ENCODE measurements at regions of chr14 and their contacts with region 1.

Region 1: DNA sequence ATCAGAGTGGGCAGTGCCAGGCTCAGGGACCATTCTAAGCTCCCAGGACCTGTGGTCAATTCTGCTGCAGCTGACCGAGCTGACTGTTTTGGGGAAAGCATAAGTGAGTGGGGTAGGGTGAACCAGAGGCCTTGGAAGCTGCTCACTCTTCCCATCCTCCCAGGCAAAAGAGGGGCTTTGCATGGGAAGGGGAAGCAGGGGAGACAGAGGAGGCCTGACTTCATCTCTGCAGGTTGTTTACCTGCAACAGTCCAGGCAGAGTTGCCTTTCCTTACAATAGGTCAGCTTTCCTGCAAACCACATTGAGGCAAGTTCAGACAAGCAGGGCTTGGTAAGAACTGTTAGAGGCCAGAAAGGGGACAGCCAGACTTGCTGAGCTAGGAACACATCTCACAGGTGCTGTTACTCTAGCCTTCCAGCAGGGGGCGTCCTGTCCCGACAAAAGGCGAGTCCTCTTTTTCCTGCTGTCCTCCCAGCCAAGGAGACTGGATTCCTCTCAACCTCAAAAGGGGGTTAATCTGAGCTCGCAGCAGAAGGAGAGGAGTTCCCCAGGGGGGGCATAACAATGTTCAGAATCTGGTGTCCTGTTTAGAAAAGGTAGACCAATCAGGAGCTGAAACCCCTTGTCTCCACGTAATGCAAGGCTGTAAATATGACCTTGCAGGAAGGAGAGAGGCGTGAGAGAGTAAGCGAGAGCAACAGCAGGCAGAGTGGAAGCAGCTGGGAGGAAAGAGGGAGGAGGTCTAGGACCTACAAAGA is 4.3 kb upstream of the DHRS2 start:
- DNase-seq: peak; percentile 51
- ATAC-seq: peak; percentile 93
- H3K4me3 ChIP-seq: no peak overlapping the region
- H3K27ac ChIP-seq: 0 out of 2 replicates have a peak overlapping the region, but pooled peaks have one; percentile 3
- H3K4me1 ChIP-seq: peaks cover 5% of the 10 kb centered on the region
- H3K27me3 ChIP-seq: no peaks in the 10 kb centered on the region
- CTCF ChIP-seq: peak; percentile 92 to 98 (median 96)
- EP300 ChIP-seq: no peak
- POLR2A ChIP-seq: no peak
- RAD21 ChIP-seq: peak; percentile 77

Region 2: DNA sequence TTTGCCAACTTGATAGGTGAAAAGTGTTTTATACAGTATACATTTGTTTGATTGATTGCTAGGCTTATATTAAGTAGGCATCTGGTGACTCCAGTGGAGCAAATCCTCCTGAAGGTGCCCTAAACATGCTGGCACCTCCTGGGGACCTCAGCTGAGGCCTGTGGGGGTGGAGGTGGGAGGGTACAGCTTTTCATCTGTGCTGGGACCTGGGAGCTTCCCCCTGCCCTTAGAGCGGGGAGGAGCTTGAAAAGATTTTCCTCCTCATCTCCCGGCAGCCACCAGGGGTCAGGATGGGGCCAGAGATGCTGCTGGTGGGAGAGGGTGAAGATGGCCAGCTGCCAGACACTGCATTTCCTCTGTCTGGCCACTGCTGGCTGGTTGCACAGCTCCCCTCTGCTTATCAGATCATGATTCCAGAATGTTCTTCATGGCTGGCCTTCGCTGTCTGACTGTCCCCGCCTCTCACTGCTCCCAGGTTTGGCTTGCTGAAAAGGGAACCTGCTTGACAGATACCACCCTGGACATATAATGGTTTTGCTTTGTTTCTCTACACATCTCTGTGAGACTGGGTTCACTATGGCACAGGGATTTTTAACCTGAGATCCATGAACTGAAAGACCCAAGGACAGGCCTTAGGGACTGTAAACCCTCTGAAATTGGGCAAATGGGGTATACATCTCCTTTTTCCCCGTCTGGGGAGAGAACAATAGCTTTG is 42.8 kb before region 1 on chr14:
- CTCF ChIA-PET with region 1: interaction called, 91 read pairs
- POLR2A ChIA-PET with region 1: interaction called, 12 read pairs
- RAD21 ChIA-PET with region 1: interaction called, 44 read pairs
- SMC1A ChIA-PET with region 1: interaction called, 44 read pairs
- in situ Hi-C with region 1: no loop called
- intact Hi-C with region 1: loop called (anchors 2 kb)
- DNase-seq: peak; percentile 56
- ATAC-seq: peak; percentile 100
- H3K4me3 ChIP-seq: no peak overlapping the region
- H3K27ac ChIP-seq: no peak overlapping the region
- H3K4me1 ChIP-seq: peaks cover 8% of the 10 kb centered on the region
- H3K27me3 ChIP-seq: no peaks in the 10 kb centered on the region
- CTCF ChIP-seq: peak; percentile 94 to 99 (median 95); a peak in 5 of 6 replicates
- EP300 ChIP-seq: 0 out of 4 replicates have a peak, but pooled peaks of 1 of the 2 experiments have one; percentile 15
- POLR2A ChIP-seq: no peak
- RAD21 ChIP-seq: peak; percentile 99

Region 3: GRCh38 chr14:23613242-23614070 is 18.4 kb before region 1 on chr14:
- CTCF ChIA-PET with region 1: interaction called, 67 read pairs
- POLR2A ChIA-PET with region 1: no interaction called
- RAD21 ChIA-PET with region 1: interaction called, 3 read pairs
- SMC1A ChIA-PET with region 1: interaction called, 22 read pairs
- in situ Hi-C with region 1: no loop called
- intact Hi-C with region 1: no loop called
- DNase-seq: no peak
- ATAC-seq: no peak; the same call in 2 of the 3 replicates
- H3K4me3 ChIP-seq: no peak overlapping the region
- H3K27ac ChIP-seq: no peak overlapping the region
- H3K4me1 ChIP-seq: no peaks in the 10 kb centered on the region
- H3K27me3 ChIP-seq: no peaks in the 10 kb centered on the region
- CTCF ChIP-seq: no peak
- EP300 ChIP-seq: no peak
- POLR2A ChIP-seq: no peak
- RAD21 ChIP-seq: no peak

Region 4: DNA sequence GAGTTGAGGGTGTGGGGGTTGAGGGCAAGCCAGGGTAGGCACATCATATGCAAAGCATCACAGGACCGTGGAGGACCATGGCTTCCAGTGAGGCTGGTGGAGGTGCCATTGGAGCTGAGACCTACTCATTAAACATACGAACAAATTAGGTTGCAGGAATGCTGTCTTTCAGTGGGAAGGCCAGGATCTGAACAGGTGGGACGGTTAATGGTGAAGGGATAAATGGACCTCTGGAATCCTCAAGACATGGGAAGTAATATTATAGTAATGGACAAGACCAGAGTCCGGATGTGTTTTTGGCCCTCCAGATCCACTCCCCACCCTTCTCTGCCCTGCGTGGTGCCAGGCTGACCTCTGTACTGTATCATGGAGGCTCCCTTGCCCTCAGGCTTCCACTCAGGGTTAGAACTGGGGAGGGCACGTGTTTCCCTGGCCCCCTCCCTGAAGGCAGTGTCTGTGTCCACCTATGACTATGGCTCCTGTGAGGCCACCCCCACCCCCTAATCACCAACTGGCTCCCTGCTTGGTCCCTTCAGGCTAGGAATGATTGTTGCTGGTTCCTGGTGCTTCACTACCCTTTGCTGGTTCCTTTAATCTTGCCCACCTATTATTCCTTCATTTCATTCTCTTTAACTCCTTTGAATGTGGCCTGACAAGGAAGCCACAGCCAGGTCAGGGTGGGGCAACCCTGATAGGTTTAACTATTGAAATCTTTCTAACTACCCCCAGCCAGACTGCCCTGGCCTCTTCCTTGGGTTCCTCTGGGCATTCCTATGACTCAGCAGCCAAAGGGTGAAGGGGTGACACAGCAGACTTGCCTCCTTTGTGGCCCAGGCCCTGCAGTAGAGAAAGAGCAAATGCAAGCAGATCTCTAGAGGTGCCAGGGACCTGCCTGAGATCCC is 15.0 kb after region 1 on chr14:
- CTCF ChIA-PET with region 1: interaction called, 28 read pairs
- POLR2A ChIA-PET with region 1: no interaction called
- RAD21 ChIA-PET with region 1: interaction called, 5 read pairs
- SMC1A ChIA-PET with region 1: interaction called, 8 read pairs
- in situ Hi-C with region 1: no loop called
- intact Hi-C with region 1: no loop called
- DNase-seq: no peak
- ATAC-seq: no peak
- H3K4me3 ChIP-seq: no peak overlapping the region
- H3K27ac ChIP-seq: no peak overlapping the region
- H3K4me1 ChIP-seq: no peaks in the 10 kb centered on the region
- H3K27me3 ChIP-seq: no peaks in the 10 kb centered on the region
- CTCF ChIP-seq: no peak
- EP300 ChIP-seq: no peak
- POLR2A ChIP-seq: no peak
- RAD21 ChIP-seq: no peak

Region 5: DNA sequence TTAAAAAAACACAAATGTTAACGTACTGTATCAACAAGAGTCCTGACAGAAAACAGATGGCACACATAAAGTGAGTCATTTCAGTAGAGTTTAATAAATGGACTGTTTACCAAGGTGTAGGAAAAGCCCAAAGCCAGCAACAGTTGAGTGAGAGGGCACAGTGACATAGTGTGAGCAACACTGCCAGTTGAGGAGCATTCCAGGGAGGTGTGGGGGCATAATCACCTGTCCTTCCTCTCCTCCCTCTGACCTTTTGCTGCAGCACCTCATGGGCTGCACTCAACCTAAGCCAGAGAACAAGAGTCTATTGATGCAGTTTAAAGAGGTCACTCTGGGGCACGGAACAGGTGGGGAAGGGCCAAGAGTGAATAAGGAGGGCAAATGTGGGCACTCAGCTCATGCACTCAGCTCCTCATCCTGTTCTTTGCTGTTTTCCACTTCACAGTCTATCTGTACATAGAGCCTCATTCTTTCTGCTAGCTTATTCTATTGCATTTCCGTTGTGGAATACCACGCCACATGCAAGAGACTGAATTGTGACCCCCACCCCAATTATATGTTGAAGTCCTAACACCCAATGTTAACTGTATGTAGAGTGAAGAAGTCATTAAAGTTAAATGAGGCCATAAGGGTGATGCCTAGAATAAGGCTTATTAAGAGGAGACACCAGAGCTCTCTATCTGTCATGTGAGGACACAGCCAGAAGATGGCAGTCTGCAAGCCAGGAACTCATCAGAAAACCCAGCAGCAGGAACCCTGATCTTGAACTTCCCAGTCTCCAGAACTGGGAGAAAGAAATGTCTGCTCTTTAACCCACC is 33.7 kb after region 1 on chr14:
- CTCF ChIA-PET with region 1: interaction called, 27 read pairs
- POLR2A ChIA-PET with region 1: no interaction called
- RAD21 ChIA-PET with region 1: interaction called, 8 read pairs
- SMC1A ChIA-PET with region 1: interaction called, 16 read pairs
- in situ Hi-C with region 1: no loop called
- intact Hi-C with region 1: no loop called
- DNase-seq: no peak
- ATAC-seq: peak; percentile 85
- H3K4me3 ChIP-seq: no peak overlapping the region
- H3K27ac ChIP-seq: no peak overlapping the region
- H3K4me1 ChIP-seq: no peaks in the 10 kb centered on the region
- H3K27me3 ChIP-seq: no peaks in the 10 kb centered on the region; a peak in 1 of 4 replicates
- CTCF ChIP-seq: peak; percentile 55 to 76 (median 69)
- EP300 ChIP-seq: no peak
- POLR2A ChIP-seq: no peak
- RAD21 ChIP-seq: peak; percentile 66

Region 6: GRCh38 chr14:23929822-23930294 is 298.0 kb after region 1 on chr14:
- CTCF ChIA-PET with region 1: interaction called, 30 read pairs
- POLR2A ChIA-PET with region 1: no interaction called
- RAD21 ChIA-PET with region 1: interaction called, 23 read pairs
- SMC1A ChIA-PET with region 1: interaction called, 20 read pairs
- in situ Hi-C with region 1: no loop called
- intact Hi-C with region 1: loop called (anchors 2 kb)
- DNase-seq: peak; percentile 25
- ATAC-seq: peak; percentile 99
- H3K4me3 ChIP-seq: no peak overlapping the region
- H3K27ac ChIP-seq: no peak overlapping the region
- H3K4me1 ChIP-seq: no peaks in the 10 kb centered on the region
- H3K27me3 ChIP-seq: no peaks in the 10 kb centered on the region; a peak in 1 of 4 replicates
- CTCF ChIP-seq: peak; percentile 84 to 97 (median 96)
- EP300 ChIP-seq: no peak
- POLR2A ChIP-seq: no peak
- RAD21 ChIP-seq: peak; percentile 80

Measured in GM12878 (cell line).